IMR-90 (cell line): ENCODE measurements at regions of chr5 and their contacts with region 1.

Region 1: DNA sequence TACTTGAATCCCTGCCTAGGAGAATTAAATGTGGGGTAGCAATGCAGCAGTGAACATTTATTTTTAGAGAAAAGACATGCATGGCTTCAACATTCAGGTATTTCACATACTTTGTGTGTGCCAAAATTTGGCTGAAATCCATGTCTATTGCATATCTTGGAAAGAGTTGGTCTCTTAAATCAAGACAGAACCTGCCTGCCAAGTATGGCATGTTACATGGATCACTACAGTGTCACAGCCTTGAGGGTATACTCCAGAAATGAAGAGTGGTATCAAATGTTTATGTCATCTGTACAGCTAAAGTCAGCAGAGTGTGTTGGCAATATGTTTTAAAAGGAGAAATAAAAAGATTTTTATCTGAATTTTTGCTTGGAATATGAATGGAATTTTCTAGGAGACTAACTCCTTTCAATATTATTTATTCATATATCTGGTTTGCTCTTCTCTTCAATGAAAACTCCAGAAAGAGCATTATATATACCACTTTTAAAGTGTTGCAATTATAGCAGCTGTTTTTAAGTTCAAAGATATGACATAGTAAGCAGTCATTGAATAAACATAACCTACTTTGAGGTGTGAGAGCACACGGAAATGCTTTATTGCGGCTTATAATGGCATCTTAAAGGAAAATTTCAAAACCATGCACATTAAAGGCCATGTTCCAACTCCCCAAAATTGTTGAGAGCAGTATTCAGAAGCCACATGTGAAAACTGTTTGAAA is 95.4 kb upstream of the MINAR2 start:
- DNase-seq: no peak
- ATAC-seq: no peak
- H3K4me3 ChIP-seq: no peak overlapping the region
- H3K27ac ChIP-seq: no peak overlapping the region
- H3K4me1 ChIP-seq: no peaks in the 10 kb centered on the region
- H3K27me3 ChIP-seq: no peaks in the 10 kb centered on the region
- CTCF ChIP-seq: no peak
- POLR2A ChIP-seq: no peak
- RAD21 ChIP-seq: no peak

Region 2: GRCh38 chr5:129361440-129362025 is 291.0 kb before region 1 on chr5:
- CTCF ChIA-PET with region 1: no interaction called
- POLR2A ChIA-PET with region 1: no interaction called
- dilution Hi-C with region 1: no loop called
- in situ Hi-C with region 1: no loop called
- intact Hi-C with region 1: loop called (anchors 10 kb)
- DNase-seq: peak; percentile 3
- ATAC-seq: no peak; the same call in 1 of the 2 replicates
- H3K4me3 ChIP-seq: no peak overlapping the region
- H3K27ac ChIP-seq: no peak overlapping the region
- H3K4me1 ChIP-seq: no peaks in the 10 kb centered on the region
- H3K27me3 ChIP-seq: no peaks in the 10 kb centered on the region
- CTCF ChIP-seq: peak; percentile 47
- POLR2A ChIP-seq: no peak
- RAD21 ChIP-seq: 0 out of 2 replicates have a peak, but pooled peaks have one; percentile 28

Region 3: GRCh38 chr5:129616517-129616916 is 36.0 kb before region 1 on chr5:
- CTCF ChIA-PET with region 1: no interaction called
- POLR2A ChIA-PET with region 1: no interaction called
- dilution Hi-C with region 1: no loop called
- in situ Hi-C with region 1: no loop called
- intact Hi-C with region 1: no loop called
- DNase-seq: no peak
- ATAC-seq: no peak
- H3K4me3 ChIP-seq: no peak overlapping the region
- H3K27ac ChIP-seq: no peak overlapping the region
- H3K4me1 ChIP-seq: no peaks in the 10 kb centered on the region
- H3K27me3 ChIP-seq: no peaks in the 10 kb centered on the region
- CTCF ChIP-seq: no peak
- POLR2A ChIP-seq: no peak
- RAD21 ChIP-seq: no peak

Region 4: GRCh38 chr5:129852747-129853352 is 200.3 kb after region 1 on chr5:
- CTCF ChIA-PET with region 1: no interaction called
- POLR2A ChIA-PET with region 1: no interaction called
- dilution Hi-C with region 1: no loop called
- in situ Hi-C with region 1: no loop called
- intact Hi-C with region 1: no loop called
- DNase-seq: peak; percentile 55
- ATAC-seq: peak; percentile 91
- H3K4me3 ChIP-seq: no peak overlapping the region
- H3K27ac ChIP-seq: no peak overlapping the region
- H3K4me1 ChIP-seq: no peaks in the 10 kb centered on the region
- H3K27me3 ChIP-seq: no peaks in the 10 kb centered on the region
- CTCF ChIP-seq: peak; percentile 78
- POLR2A ChIP-seq: no peak
- RAD21 ChIP-seq: peak; percentile 58